Heart left ventricle (tissue), 16 donors: ENCODE measurements at regions of chr21 and their contacts with region 1.

Region 1: DNA sequence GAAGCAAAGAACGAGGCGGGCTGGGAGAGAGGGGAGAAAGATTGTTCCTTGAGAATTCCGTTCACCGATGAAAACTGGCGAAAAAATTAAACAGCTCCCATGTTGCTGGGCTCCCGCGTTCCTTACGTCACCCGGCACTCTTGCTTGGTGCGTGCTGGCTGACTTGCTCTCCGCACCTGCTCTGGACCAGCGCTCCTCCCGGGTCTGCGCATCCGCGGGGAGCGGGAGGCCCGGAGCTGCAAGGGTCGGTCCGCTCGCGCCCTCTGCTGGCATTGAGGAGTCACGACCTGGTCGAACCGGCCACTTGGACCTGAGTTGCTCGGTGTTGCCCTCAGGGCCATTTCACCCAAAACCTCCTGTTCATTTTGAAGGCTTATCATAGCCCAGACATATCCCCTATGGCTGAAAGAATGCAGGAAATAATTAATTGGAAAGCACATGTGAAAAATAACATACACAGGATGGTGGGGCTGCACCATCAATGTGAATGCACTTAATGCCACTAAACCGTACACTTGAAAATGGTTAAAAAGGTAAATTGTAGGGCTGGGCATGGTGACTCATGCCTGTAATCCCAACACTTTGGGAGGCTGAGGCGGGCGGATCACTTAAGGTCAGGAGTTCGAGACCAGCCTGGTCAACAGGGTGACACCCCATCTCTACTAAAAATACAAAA is 98.9 kb upstream of the BACE2 start:
- DNase-seq: peak; percentile 75 to 92 (median 87)
- ATAC-seq: peak; percentile 59 to 90 (median 86)
- H3K4me3 ChIP-seq: peak overlapping the region in 10 of 12 donors; percentile 18 to 46 (median 40)
- H3K27ac ChIP-seq: no peak overlapping the region
- H3K4me1 ChIP-seq: peaks cover 0 to 10% (median 6%) of the 10 kb centered on the region in 12 donors
- H3K27me3 ChIP-seq: peaks cover 0 to 24% (median 7%) of the 10 kb centered on the region in 9 donors
- CTCF ChIP-seq: peak; percentile 77 to 95 (median 90)
- POLR2A ChIP-seq: no peak

Region 2: DNA sequence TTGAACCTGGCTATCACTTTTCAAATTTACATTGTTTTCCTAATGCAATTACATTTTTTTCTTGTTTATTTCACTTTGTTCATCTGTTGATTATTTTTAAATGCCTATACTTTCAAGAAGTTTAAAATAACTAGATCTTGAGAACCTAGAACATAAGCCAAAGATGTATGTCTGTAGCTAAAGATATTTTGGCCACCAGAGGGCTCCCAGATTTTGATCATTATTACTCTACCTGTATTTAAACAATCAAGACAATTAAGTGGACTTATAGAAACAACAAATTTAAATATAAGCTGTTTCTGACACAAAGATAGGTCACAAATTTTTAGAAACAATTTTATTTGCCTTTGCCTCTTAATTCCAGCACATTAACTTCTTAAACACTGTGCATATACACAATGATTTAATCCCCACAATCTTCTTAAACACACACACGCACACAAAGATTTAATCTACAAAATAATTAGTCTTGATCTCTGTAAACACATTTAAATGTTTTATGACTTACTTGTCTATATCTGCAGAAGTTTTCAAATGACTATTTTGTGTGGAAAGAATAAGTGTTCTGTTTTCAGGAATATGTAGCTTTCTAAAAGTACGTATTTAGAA is 602.1 kb before region 1 on chr21:
- intact Hi-C with region 1: loop called (anchors 1 to 5 kb)
- DNase-seq: no peak
- ATAC-seq: no peak
- H3K4me3 ChIP-seq: no peak overlapping the region
- H3K27ac ChIP-seq: no peak overlapping the region
- H3K4me1 ChIP-seq: no peaks in the 10 kb centered on the region
- H3K27me3 ChIP-seq: peaks cover 0 to 12% (median 0%) of the 10 kb centered on the region in 9 donors
- CTCF ChIP-seq: peak in 11 of 12 donors; percentile 20 to 53 (median 42)
- POLR2A ChIP-seq: no peak